ENCODE measurements at regions of chr12 and their contacts with region 1.

Region 1: DNA sequence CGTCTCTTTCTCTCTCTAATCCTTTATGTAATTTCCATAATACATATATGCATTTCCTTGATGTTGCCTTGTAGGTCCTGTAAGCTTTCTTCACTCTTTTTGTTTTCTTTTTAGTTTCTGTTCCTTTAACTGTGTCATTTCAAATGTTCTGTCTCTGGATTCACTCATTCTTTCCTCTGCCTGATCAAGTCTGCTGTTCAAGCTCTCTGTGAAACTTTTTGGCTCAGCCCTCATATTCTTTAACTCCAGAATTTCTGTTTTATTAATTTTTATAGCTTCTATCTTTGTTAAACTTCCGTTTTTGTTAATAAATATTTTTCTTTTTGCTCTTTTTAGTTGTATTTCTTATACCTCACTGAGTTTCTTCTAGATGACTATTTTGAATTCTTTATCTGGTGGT is 321.3 kb upstream of the LMO3 start:
- DNase-seq: no peak
- ATAC-seq: no peak
- H3K4me3 ChIP-seq: no peak overlapping the region
- H3K27ac ChIP-seq: no peak overlapping the region
- H3K4me1 ChIP-seq: no peaks in the 10 kb centered on the region
- H3K27me3 ChIP-seq: no peaks in the 10 kb centered on the region
- CTCF ChIP-seq: no peak
- POLR2A ChIP-seq: no peak
- RAD21 ChIP-seq: no peak

Region 2: DNA sequence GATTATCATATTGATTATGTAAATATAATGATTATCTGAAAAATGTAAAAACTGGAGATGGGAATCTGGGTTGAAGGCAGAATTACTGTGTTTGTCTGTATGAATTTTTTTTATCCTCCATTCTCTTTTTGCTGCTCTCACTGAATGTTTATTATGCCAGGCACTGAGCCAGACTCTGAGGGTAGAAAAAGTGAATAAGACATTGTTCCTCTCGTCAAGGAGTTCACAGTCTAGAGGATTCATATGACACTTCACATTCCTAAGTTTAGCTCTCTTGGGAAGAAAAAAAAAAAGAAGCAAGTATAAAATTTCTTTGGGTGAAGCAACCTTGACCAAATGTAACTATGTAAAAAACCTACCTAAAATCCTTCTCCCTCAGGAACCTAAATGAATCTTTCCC is 200.4 kb before region 1 on chr12:
- CTCF ChIA-PET with region 1: no interaction called
- POLR2A ChIA-PET with region 1: no interaction called
- RAD21 ChIA-PET with region 1: no interaction called
- intact Hi-C with region 1: no loop called
- DNase-seq: no peak
- ATAC-seq: no peak
- H3K4me3 ChIP-seq: no peak overlapping the region
- H3K27ac ChIP-seq: no peak overlapping the region
- H3K4me1 ChIP-seq: no peaks in the 10 kb centered on the region
- H3K27me3 ChIP-seq: no peaks in the 10 kb centered on the region
- CTCF ChIP-seq: no peak
- POLR2A ChIP-seq: no peak
- RAD21 ChIP-seq: no peak

Region 3: DNA sequence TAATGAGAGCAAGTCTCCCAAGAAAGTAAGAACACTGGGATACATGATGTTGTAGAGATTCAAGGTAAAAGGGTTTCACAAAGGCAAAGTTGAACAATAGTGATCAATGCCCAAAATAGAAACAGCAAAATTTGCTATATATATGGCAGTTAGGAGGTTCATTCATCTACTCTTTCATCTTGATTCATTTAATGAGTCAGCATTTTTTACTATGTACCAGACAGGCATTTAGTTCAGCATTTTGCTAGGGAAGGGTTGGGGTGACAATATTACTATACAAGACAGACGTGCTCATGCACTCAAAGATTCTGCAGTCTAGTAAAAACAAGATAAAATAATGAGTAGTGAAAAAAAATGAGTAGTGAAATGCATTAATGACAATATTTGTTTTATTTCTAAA is 56.4 kb before region 1 on chr12:
- CTCF ChIA-PET with region 1: no interaction called
- POLR2A ChIA-PET with region 1: no interaction called
- RAD21 ChIA-PET with region 1: no interaction called
- intact Hi-C with region 1: loop called (anchors 2 kb)
- DNase-seq: no peak
- ATAC-seq: no peak
- H3K4me3 ChIP-seq: no peak overlapping the region
- H3K27ac ChIP-seq: no peak overlapping the region
- H3K4me1 ChIP-seq: no peaks in the 10 kb centered on the region
- H3K27me3 ChIP-seq: no peaks in the 10 kb centered on the region
- CTCF ChIP-seq: no peak
- POLR2A ChIP-seq: no peak
- RAD21 ChIP-seq: no peak

Measured in HCT116 (cell line).